A673 (cell line): ENCODE measurements at regions of chrX and their contacts with region 1.

Region 1: DNA sequence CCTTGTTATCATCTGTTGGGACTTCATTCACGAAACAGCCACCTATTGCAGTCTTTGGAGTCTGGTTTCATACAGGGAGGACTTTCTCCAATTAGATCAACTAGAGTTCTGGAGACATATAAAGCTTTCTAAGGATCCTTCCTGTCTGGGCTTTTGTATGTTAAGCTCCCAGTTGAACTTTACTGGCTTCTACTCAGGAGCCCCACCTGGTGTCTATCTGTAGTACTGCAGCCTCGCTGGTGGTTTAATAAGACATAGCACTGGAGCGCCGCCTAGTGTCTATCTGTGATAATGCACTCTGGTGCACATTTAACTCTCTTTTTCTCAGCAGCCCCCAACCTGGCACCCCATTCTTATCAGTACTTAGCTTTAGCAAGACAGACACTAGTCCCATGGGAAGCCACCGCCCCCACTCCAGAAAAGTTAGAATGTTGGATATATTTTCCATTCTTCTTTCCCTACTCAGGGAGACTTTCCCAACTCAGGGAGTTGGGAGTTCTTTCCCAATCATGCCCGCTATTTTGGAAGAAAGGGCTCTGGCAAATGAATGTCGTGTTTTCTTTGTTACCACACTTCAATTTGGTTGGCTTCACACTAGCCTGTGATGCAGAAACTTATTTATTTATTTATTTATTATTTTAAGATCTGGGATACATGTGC is 36.9 kb upstream of the SYTL4 start:
- DNase-seq: peak; percentile 84
- H3K4me3 ChIP-seq: no peak overlapping the region
- H3K27ac ChIP-seq: no peak overlapping the region
- H3K4me1 ChIP-seq: no peaks in the 10 kb centered on the region
- H3K27me3 ChIP-seq: peaks cover 26% of the 10 kb centered on the region
- CTCF ChIP-seq: peak; percentile 100

Region 2: GRCh38 chrX:100512471-100512870 is 256.3 kb before region 1 on chrX:
- CTCF ChIA-PET with region 1: no interaction called
- POLR2A ChIA-PET with region 1: no interaction called
- intact Hi-C with region 1: loop called (anchors 5 kb)
- DNase-seq: peak; percentile 10
- H3K4me3 ChIP-seq: no peak overlapping the region
- H3K27ac ChIP-seq: no peak overlapping the region
- H3K4me1 ChIP-seq: no peaks in the 10 kb centered on the region
- H3K27me3 ChIP-seq: no peaks in the 10 kb centered on the region
- CTCF ChIP-seq: peak; percentile 65

Region 3: DNA sequence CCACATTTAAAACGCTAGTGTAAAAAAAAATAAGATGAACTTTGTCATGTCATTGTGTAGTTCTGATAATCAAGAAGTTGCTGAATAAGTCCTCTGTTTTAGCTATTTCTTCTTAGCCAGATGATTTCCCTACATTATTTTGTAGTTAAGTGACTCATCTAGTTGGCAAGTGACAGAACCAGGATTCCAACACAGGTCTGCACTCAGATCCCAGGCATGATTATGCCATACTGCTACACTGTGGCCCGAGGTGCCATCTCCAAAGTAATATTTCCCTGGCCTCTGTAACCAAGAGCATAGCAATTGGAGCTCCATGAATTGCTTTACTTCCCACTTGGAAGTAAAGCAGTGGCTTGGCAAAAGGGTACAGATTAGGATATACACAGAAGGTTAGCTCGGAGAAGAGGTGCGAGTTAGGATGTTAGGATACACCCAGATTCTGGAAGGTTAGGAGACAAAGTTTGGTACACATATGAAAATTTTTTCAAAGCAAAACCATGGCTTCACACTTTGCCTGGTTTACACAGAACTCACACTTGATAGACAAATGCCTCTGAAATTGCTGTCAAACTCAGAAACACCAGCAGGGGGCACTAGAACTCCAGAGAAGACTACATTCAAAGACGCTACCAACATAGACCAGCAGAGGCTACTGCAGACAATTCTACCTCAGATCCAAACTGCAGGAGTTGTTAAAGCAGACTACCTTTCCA is 83.4 kb before region 1 on chrX:
- CTCF ChIA-PET with region 1: interaction called, 24 read pairs
- POLR2A ChIA-PET with region 1: no interaction called
- intact Hi-C with region 1: loop called (anchors 1 kb)
- DNase-seq: peak; percentile 82
- H3K4me3 ChIP-seq: no peak overlapping the region
- H3K27ac ChIP-seq: no peak overlapping the region
- H3K4me1 ChIP-seq: no peaks in the 10 kb centered on the region
- H3K27me3 ChIP-seq: no peaks in the 10 kb centered on the region
- CTCF ChIP-seq: peak; percentile 86